H1 (cell line): ENCODE measurements at regions of chr11 and their contacts with region 1.

Region 1: GRCh38 chr11:131549770-131550169 is 179.4 kb downstream of the NTM start:
- DNase-seq: no peak
- H3K4me3 ChIP-seq: no peak overlapping the region
- H3K27ac ChIP-seq: no peak overlapping the region
- H3K4me1 ChIP-seq: peaks cover 0 to 4% (median 3%) of the 10 kb centered on the region in 4 experiments; a peak in 6 of 7 replicates
- H3K27me3 ChIP-seq: no peaks in the 10 kb centered on the region
- CTCF ChIP-seq: no peak
- EP300 ChIP-seq: no peak
- POLR2A ChIP-seq: no peak
- RAD21 ChIP-seq: no peak

Region 2: DNA sequence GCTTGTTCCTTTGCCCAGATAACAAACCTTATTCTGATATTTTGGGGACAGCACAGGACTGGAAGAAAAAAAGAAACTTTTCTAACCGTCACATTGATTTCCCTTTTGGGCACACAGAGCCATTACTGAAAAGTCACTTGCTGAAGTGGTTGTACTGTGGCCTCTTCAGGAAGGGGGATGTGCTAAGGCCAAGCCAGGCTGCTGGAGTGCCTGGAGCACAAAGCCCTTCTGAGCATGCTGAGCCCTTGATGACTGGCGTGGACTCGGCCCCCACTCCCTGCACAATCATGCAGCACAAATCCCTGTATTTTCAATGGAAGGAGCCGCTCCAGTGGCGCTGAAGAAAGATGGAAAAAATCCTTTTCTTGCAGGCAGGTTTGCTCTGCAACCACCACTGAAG is 15.2 kb before region 1 on chr11:
- CTCF ChIA-PET with region 1: interaction called, 15 read pairs
- POLR2A ChIA-PET with region 1: no interaction called
- DNase-seq: no peak
- H3K4me3 ChIP-seq: no peak overlapping the region
- H3K27ac ChIP-seq: no peak overlapping the region
- H3K4me1 ChIP-seq: peaks cover 0 to 6% (median 0%) of the 10 kb centered on the region in 4 experiments; a peak in 2 of 7 replicates
- H3K27me3 ChIP-seq: no peaks in the 10 kb centered on the region
- CTCF ChIP-seq: no peak
- EP300 ChIP-seq: no peak
- POLR2A ChIP-seq: no peak
- RAD21 ChIP-seq: no peak

Region 3: DNA sequence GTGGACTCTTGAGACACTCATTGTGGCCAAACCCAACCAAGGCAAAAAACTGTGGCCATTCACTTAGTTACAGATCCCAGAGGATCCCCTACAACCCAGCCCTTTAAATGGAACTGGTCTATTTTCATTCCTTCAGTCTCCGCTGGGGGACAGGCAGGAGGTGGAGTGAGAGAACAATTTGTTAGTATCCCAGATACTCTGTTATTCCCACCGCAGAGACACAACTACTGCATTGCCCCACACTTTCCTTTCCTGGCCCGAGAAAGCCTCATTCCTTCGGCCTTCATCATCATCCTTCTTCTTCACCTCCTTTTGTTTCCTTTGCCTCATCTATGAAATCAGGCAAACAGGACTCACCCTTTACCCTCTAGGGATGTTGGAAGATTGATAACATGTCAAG is 11.7 kb after region 1 on chr11:
- CTCF ChIA-PET with region 1: interaction called, 19 read pairs
- POLR2A ChIA-PET with region 1: no interaction called
- DNase-seq: no peak
- H3K4me3 ChIP-seq: no peak overlapping the region
- H3K27ac ChIP-seq: no peak overlapping the region
- H3K4me1 ChIP-seq: peaks cover 0 to 7% (median 0%) of the 10 kb centered on the region in 4 experiments; a peak in 4 of 7 replicates
- H3K27me3 ChIP-seq: no peaks in the 10 kb centered on the region
- CTCF ChIP-seq: no peak
- EP300 ChIP-seq: no peak
- POLR2A ChIP-seq: no peak
- RAD21 ChIP-seq: peak in 1 of 2 experiments; percentile 5; a peak in 1 of 4 replicates

Region 4: DNA sequence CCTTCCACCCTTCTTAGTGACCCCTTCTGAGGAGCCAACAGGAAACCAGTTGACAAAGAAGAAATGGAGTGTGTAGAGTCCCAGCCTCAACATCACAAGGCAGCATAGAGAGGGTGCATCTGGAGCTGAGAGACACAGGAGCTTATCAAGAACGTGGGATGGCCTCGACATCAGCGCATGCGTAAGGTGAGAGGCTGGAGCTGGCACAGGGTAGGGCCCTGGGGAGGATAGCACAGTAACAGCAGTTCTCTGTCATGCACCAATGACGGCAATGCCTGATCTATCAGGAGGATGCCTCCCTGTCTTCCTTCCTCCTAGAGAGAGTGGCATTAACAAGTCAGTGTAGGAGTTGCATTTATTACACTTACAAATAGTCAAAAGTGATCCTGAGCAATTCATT is 246.8 kb after region 1 on chr11:
- CTCF ChIA-PET with region 1: no interaction called
- POLR2A ChIA-PET with region 1: no interaction called
- DNase-seq: no peak
- H3K4me3 ChIP-seq: no peak overlapping the region
- H3K27ac ChIP-seq: no peak overlapping the region
- H3K4me1 ChIP-seq: peaks cover 5 to 8% (median 7%) of the 10 kb centered on the region in 4 experiments
- H3K27me3 ChIP-seq: no peaks in the 10 kb centered on the region; a peak in 1 of 7 replicates
- CTCF ChIP-seq: no peak
- EP300 ChIP-seq: no peak
- POLR2A ChIP-seq: no peak
- RAD21 ChIP-seq: no peak